Activated CD8-positive, alpha-beta T cell treated with anti-CD3 and anti-CD28 coated beads for 36 hours (primary cell): ENCODE measurements at regions of chr18 and their contacts with region 1.

Region 1: DNA sequence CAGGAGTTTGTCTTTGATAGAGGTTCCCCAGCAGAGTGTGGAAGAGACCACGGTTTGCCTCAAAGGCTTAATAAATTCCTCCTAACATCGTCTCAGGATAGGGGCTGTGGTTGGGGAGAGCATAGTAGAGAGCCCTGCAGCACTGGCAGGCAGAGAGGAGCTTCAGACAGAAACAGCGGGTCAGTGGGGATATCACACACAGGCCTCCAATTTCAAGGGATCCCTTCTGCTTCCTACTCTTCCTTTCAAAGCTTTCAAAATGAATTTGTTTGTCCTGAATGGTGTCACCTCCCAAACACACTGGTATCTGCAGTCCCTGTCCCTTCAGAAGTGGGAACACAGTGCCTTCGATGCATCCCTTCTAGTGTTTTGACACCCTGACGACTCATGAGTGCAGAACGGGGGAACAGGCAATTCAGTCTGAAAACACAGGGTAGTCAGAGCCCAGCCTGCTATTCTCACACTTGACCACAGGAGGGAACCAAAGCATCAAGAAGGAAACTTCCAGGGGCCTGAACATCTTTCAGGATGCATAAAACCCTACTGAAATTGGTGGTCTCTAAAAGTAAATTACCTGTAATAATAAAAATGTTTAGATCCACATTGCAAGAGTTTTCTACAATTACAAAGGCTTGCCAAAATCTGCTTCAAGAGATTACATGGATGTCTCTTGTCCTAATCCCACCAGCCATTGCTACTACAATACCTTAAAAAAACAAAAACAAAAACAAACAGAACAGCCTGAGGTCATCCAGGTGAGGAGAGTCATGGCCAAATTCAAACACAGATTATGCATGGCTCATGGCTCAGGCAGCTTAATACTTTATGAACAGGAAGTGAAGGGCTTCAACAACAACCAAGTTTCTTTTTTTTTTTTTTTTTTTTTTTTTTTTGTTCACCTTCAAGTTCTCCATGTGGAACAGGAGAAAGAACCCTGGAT is 49.8 kb downstream of the SLC14A2 start:
- DNase-seq: peak; percentile 80
- ATAC-seq: peak; percentile 56
- H3K4me3 Mint-ChIP-seq: no peak overlapping the region
- H3K27ac Mint-ChIP-seq: peak overlapping the region; percentile 61
- H3K4me1 Mint-ChIP-seq: peaks cover 50% of the 10 kb centered on the region
- H3K27me3 Mint-ChIP-seq: no peaks in the 10 kb centered on the region
- CTCF ChIP-seq: peak; percentile 91

Region 2: GRCh38 chr18:45690975-45691815 is 26.1 kb after region 1 on chr18:
- CTCF ChIA-PET with region 1: interaction called, 231 read pairs
- POLR2A ChIA-PET with region 1: interaction called, 23 read pairs
- intact Hi-C with region 1: loop called (anchors 1 kb)
- DNase-seq: peak; percentile 88
- ATAC-seq: no peak
- H3K4me3 Mint-ChIP-seq: no peak overlapping the region
- H3K27ac Mint-ChIP-seq: no peak overlapping the region
- H3K4me1 Mint-ChIP-seq: peaks cover 49% of the 10 kb centered on the region
- H3K27me3 Mint-ChIP-seq: no peaks in the 10 kb centered on the region
- CTCF ChIP-seq: peak; percentile 88

Region 3: GRCh38 chr18:45806226-45806625 is 141.1 kb after region 1 on chr18:
- CTCF ChIA-PET with region 1: interaction called, 23 read pairs
- POLR2A ChIA-PET with region 1: no interaction called
- intact Hi-C with region 1: no loop called
- DNase-seq: no peak
- ATAC-seq: no peak
- H3K4me3 Mint-ChIP-seq: no peak overlapping the region
- H3K27ac Mint-ChIP-seq: no peak overlapping the region
- H3K4me1 Mint-ChIP-seq: peaks cover 28% of the 10 kb centered on the region
- H3K27me3 Mint-ChIP-seq: peaks cover 2% of the 10 kb centered on the region
- CTCF ChIP-seq: no peak

Region 4: DNA sequence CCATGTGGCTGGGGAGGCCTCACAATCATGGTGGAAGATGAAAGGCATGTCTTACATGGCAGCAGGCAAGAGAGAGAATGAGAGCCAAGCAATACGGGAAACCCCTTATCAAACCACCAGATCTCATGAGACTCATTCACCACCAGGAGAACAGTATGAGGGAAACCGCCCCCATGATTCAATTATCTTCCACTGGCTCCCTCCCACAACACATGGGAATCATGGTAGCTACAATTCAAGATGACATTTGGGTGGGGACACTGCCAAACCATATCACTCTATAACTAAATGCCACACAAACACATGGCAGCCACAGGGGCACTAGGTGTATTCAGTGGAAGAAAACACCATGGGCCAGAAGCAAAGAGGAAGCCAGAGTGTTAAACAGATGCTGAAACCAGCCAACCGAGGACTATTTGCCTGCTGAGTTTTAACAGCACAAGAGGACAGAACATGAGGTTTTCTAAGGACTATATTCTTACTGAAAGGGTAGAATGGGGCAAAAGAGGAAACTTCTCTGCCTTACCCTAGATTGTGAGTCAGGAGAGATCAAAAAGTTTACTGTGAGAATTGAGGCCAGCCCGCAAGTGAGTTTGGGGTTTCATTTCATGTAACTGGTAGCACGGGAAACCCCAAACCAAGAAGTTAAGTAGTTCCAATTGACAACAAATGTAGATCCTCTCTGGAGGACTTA is 209.5 kb after region 1 on chr18:
- CTCF ChIA-PET with region 1: interaction called, 155 read pairs
- POLR2A ChIA-PET with region 1: interaction called, 4 read pairs
- intact Hi-C with region 1: loop called (anchors 2 kb)
- DNase-seq: peak; percentile 91
- ATAC-seq: peak; percentile 91
- H3K4me3 Mint-ChIP-seq: peak overlapping the region; percentile 8
- H3K27ac Mint-ChIP-seq: peak overlapping the region; percentile 92
- H3K4me1 Mint-ChIP-seq: peaks cover 41% of the 10 kb centered on the region
- H3K27me3 Mint-ChIP-seq: no peaks in the 10 kb centered on the region
- CTCF ChIP-seq: no peak

Region 5: GRCh38 chr18:45967007-45967706 is 302.1 kb after region 1 on chr18 and contains the start of gene EPG5:
- CTCF ChIA-PET with region 1: interaction called, 3 read pairs
- POLR2A ChIA-PET with region 1: no interaction called
- intact Hi-C with region 1: loop called (anchors 5 kb)
- DNase-seq: peak; percentile 97
- ATAC-seq: peak; percentile 97
- H3K4me3 Mint-ChIP-seq: peak within 1 kb of the TSS; percentile 99
- H3K27ac Mint-ChIP-seq: peak within 1 kb of the TSS; percentile 94
- H3K4me1 Mint-ChIP-seq: peaks cover 45% of the 10 kb centered on the region
- H3K27me3 Mint-ChIP-seq: no peaks in the 10 kb centered on the region
- CTCF ChIP-seq: no peak
- total RNA-seq, gene EPG5: 15.3 to 19.0 TPM